ENCODE measurements at regions of chr14 and their contacts with region 1.

Region 1: GRCh38 chr14:106518054-106518943 is 991.9 kb downstream of the TMEM121 start:
- DNase-seq: peak; percentile 85
- ATAC-seq: peak; percentile 79
- H3K4me3 ChIP-seq: no peak overlapping the region
- H3K4me3 Mint-ChIP-seq: peak overlapping the region; percentile 49
- H3K27ac ChIP-seq: peak overlapping the region in 1 of 2 donors; percentile 30
- H3K27ac Mint-ChIP-seq: peak overlapping the region; percentile 41
- H3K4me1 ChIP-seq: peaks cover 15 to 21% of the 10 kb centered on the region in 2 donors
- H3K4me1 Mint-ChIP-seq: peaks cover 20% of the 10 kb centered on the region
- H3K27me3 ChIP-seq: no peaks in the 10 kb centered on the region
- H3K27me3 Mint-ChIP-seq: peaks cover 13% of the 10 kb centered on the region
- CTCF ChIP-seq: peak; percentile 73

Region 2: DNA sequence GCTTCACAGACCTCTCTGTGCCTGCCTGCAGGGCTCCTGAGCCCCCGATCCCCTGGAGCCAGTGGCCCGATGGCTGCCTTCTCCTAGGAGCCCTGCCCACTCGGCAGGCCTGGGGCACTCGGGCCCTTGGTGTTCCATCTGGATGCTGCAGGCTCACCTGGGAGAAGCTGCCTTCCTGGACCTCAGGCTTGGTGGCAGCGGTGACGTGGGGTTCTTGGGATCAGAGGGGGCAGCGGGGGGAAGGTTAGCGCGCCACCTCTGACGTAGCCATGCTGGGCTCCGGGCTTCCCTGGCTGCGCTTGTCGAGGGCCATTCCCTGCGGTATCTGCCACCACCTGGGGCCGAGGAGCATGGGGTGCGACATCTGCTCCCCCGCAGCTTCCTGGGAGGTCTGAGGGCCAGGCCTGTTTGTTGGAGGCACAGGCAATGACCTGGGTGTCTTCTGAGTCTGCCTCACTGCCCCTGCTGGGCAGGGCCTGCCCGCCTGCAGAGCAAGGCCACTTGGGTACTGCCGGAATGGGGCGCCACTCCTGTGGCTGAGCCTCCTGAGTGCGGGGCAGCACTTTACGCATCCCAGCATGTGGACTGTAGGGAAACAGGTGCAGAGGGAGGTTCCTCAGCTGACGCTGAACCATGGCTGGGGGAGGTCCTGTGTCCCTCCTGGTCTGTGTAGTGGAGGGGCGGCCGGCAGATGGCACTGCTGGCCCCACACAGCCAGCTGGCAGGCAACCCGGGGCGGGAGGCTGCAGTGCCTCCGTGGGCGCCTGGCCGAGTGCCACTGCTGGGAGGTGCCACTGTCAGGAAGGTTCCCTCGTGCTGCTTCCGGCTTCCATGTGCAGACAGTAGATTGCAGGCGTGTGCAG is 1078.4 kb before region 1 on chr14:
- CTCF ChIA-PET with region 1: no interaction called
- POLR2A ChIA-PET with region 1: no interaction called
- intact Hi-C with region 1: no loop called
- DNase-seq: no peak
- ATAC-seq: no peak
- H3K4me3 ChIP-seq: no peak overlapping the region
- H3K4me3 Mint-ChIP-seq: no peak overlapping the region
- H3K27ac ChIP-seq: no peak overlapping the region
- H3K27ac Mint-ChIP-seq: no peak overlapping the region
- H3K4me1 ChIP-seq: peaks cover 0 to 16% of the 10 kb centered on the region in 2 donors
- H3K4me1 Mint-ChIP-seq: peaks cover 17% of the 10 kb centered on the region
- H3K27me3 ChIP-seq: no peaks in the 10 kb centered on the region
- H3K27me3 Mint-ChIP-seq: no peaks in the 10 kb centered on the region
- CTCF ChIP-seq: no peak

Region 3: GRCh38 chr14:106094654-106095189 is 423.6 kb before region 1 on chr14:
- CTCF ChIA-PET with region 1: no interaction called
- POLR2A ChIA-PET with region 1: no interaction called
- intact Hi-C with region 1: no loop called
- DNase-seq: peak; percentile 77
- ATAC-seq: peak; percentile 36
- H3K4me3 ChIP-seq: no peak overlapping the region
- H3K4me3 Mint-ChIP-seq: no peak overlapping the region
- H3K27ac ChIP-seq: no peak overlapping the region
- H3K27ac Mint-ChIP-seq: no peak overlapping the region
- H3K4me1 ChIP-seq: no peaks in the 10 kb centered on the region
- H3K4me1 Mint-ChIP-seq: no peaks in the 10 kb centered on the region
- H3K27me3 ChIP-seq: no peaks in the 10 kb centered on the region
- H3K27me3 Mint-ChIP-seq: no peaks in the 10 kb centered on the region
- CTCF ChIP-seq: peak; percentile 61

Region 4: DNA sequence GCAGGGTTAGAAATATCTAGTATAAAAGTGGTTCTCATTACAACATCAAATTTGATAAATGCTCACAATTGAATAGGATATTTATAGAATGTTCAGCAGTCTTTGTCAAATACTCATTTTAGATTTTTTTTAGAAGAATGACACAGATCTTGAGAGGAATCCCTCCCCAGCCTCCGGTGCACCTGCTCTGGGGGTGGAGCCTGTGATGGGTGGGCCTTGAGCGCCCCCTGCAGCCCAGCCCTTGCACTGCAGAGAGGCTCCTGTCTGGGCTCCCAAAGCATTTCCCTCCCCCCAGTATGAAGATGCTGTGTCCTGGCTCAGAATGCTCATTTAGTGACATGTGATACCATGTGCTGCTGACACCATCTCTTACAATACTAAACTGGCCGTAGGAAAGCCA is 199.6 kb before region 1 on chr14:
- CTCF ChIA-PET with region 1: no interaction called
- POLR2A ChIA-PET with region 1: no interaction called
- intact Hi-C with region 1: no loop called
- DNase-seq: peak; percentile 61
- ATAC-seq: peak; percentile 54
- H3K4me3 ChIP-seq: no peak overlapping the region
- H3K4me3 Mint-ChIP-seq: no peak overlapping the region
- H3K27ac ChIP-seq: no peak overlapping the region
- H3K27ac Mint-ChIP-seq: no peak overlapping the region
- H3K4me1 ChIP-seq: peaks cover 4 to 6% of the 10 kb centered on the region in 2 donors
- H3K4me1 Mint-ChIP-seq: peaks cover 2% of the 10 kb centered on the region
- H3K27me3 ChIP-seq: no peaks in the 10 kb centered on the region
- H3K27me3 Mint-ChIP-seq: no peaks in the 10 kb centered on the region
- CTCF ChIP-seq: peak; percentile 65

Region 5: DNA sequence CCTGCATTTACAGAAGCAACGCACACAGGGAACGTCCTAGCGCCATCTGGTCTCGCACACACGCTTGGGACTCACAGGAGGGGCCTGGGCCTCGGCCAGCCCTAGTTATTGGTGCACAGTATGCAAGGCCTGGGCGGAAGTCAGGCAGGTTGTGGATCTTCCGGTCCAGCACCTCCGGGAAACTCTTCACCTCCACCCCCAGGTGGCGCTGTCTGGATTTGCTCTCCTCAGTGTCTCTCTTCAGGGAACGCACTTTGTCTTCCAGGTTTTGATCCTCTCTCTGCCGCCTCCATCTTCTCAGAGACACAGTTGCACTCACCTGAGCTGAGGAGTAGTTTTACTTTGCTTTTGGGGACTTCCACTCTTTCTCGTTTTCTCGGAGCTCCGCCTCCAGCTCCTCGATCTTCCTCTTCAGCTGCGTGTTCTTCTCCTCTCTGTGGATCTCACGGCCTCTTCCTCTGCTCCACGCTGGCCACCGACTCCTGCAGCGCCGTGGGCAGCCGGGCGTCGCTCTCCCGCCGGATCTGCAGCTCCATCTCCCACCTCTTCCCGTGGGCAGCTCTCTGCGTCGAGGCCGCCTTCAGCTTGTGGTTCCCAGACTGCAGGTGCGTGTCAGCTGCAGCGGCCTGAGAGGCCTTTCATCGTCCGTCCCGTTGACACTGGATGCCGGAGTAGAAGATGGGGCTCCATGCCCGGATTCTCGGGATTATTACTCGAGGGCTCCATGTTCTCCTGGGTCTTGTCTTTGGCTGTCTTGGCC is 58.1 kb before region 1 on chr14:
- CTCF ChIA-PET with region 1: interaction called, 7 read pairs
- POLR2A ChIA-PET with region 1: no interaction called
- intact Hi-C with region 1: loop called (anchors 1 kb)
- DNase-seq: peak; percentile 47
- ATAC-seq: peak; percentile 49
- H3K4me3 ChIP-seq: no peak overlapping the region
- H3K4me3 Mint-ChIP-seq: no peak overlapping the region
- H3K27ac ChIP-seq: no peak overlapping the region
- H3K27ac Mint-ChIP-seq: no peak overlapping the region
- H3K4me1 ChIP-seq: no peaks in the 10 kb centered on the region
- H3K4me1 Mint-ChIP-seq: peaks cover 11% of the 10 kb centered on the region
- H3K27me3 ChIP-seq: no peaks in the 10 kb centered on the region
- H3K27me3 Mint-ChIP-seq: peaks cover 10% of the 10 kb centered on the region
- CTCF ChIP-seq: peak; percentile 77

Region 6: DNA sequence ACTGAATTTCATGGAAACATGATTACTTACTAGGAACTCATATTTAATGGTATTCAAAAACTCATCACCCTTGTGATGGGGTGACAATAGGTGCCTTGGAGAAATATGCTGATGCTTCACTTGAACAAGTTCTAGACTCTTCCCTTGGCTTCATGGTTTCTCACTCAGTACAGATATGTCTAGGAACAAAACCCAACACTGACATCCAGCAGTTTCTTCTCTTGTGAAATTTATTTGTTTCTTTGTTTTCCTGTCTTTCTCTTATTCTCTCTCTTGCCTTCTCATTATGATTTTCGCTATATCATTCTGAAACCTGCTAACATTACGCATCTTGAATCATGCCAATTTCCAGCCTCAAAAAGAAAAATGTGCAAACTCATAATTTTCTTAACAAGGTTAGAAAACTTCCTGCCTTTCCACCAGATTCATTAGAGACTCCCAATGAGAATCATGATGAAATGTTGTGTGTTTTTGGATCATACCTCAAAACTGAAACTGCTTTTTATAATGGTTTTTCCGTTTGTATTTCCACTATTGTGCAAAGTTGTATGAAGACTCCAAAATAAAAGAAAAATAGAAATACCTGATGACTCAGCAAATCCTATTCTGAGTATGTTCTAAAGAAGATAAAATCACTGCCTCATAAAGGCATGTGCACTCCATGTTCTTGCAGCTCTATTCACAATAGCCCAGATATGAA is 29.6 kb after region 1 on chr14:
- CTCF ChIA-PET with region 1: no interaction called
- POLR2A ChIA-PET with region 1: no interaction called
- intact Hi-C with region 1: no loop called
- DNase-seq: no peak
- ATAC-seq: no peak
- H3K4me3 ChIP-seq: no peak overlapping the region
- H3K4me3 Mint-ChIP-seq: no peak overlapping the region
- H3K27ac ChIP-seq: no peak overlapping the region
- H3K27ac Mint-ChIP-seq: no peak overlapping the region
- H3K4me1 ChIP-seq: no peaks in the 10 kb centered on the region
- H3K4me1 Mint-ChIP-seq: peaks cover 7% of the 10 kb centered on the region
- H3K27me3 ChIP-seq: no peaks in the 10 kb centered on the region
- H3K27me3 Mint-ChIP-seq: peaks cover 13% of the 10 kb centered on the region
- CTCF ChIP-seq: no peak